ENCODE measurements at regions of chr22 and their contacts with region 1.

Region 1: GRCh38 chr22:22748297-22748743 is 103.9 kb downstream of the GGTLC2 start:
- DNase-seq: peak in 4 of 5 donors; percentile 19 to 33 (median 24)
- H3K4me3 ChIP-seq: no peak overlapping the region
- H3K4me3 Mint-ChIP-seq: no peak overlapping the region
- H3K27ac ChIP-seq: no peak overlapping the region
- H3K27ac Mint-ChIP-seq: peak overlapping the region in 3 of 7 donors; percentile 17 to 74 (median 64)
- H3K4me1 ChIP-seq: peaks cover 11% of the 10 kb centered on the region
- H3K4me1 Mint-ChIP-seq: peaks cover 10 to 31% (median 24%) of the 10 kb centered on the region in 4 donors
- H3K27me3 ChIP-seq: no peaks in the 10 kb centered on the region
- H3K27me3 Mint-ChIP-seq: peaks cover 0 to 4% of the 10 kb centered on the region in 2 donors

Region 2: GRCh38 chr22:22710719-22711531 is 37.4 kb before region 1 on chr22:
- CTCF ChIA-PET with region 1: interaction called, 19 read pairs
- POLR2A ChIA-PET with region 1: no interaction called
- intact Hi-C with region 1: loop called (anchors 2 kb)
- DNase-seq: peak; percentile 54 to 69 (median 64)
- H3K4me3 ChIP-seq: no peak overlapping the region
- H3K4me3 Mint-ChIP-seq: no peak overlapping the region
- H3K27ac ChIP-seq: no peak overlapping the region
- H3K27ac Mint-ChIP-seq: peak overlapping the region in 3 of 7 donors; percentile 29 to 57 (median 36)
- H3K4me1 ChIP-seq: no peaks in the 10 kb centered on the region
- H3K4me1 Mint-ChIP-seq: peaks cover 0 to 3% (median 2%) of the 10 kb centered on the region in 4 donors
- H3K27me3 ChIP-seq: no peaks in the 10 kb centered on the region
- H3K27me3 Mint-ChIP-seq: no peaks in the 10 kb centered on the region

Region 3: DNA sequence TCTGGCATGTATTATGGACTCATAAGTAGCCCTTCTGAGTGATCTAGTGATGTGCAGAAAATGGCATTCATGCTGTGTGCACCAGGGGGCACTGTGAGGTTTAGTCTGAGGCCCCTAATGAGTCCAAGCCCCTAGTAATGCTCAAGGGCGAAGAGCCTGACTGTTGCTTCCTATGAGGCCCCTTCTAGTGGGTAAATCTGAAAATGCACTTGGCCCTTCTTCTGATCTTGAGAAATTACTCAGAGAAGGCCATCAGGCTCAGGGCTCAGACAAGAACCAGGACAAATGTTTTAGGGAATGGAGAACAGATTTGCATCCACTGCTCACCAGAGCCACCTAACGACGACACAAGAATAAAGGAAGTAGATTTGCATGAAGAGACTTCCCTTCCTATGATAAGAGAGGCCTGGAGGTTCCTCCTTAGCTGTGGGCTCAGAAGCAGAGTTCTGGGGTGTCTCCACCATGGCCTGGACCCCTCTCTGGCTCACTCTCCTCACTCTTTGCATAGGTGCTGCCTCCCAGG is 28.1 kb before region 1 on chr22:
- CTCF ChIA-PET with region 1: interaction called, 22 read pairs
- POLR2A ChIA-PET with region 1: interaction called, 9 read pairs
- intact Hi-C with region 1: loop called (anchors 1 kb)
- DNase-seq: peak in 4 of 5 donors; percentile 25 to 46 (median 39)
- H3K4me3 ChIP-seq: no peak overlapping the region
- H3K4me3 Mint-ChIP-seq: no peak overlapping the region
- H3K27ac ChIP-seq: no peak overlapping the region
- H3K27ac Mint-ChIP-seq: peak overlapping the region in 6 of 7 donors; percentile 3 to 88 (median 56)
- H3K4me1 ChIP-seq: peaks cover 9% of the 10 kb centered on the region
- H3K4me1 Mint-ChIP-seq: peaks cover 15 to 33% (median 21%) of the 10 kb centered on the region in 4 donors
- H3K27me3 ChIP-seq: no peaks in the 10 kb centered on the region
- H3K27me3 Mint-ChIP-seq: no peaks in the 10 kb centered on the region

Region 4: DNA sequence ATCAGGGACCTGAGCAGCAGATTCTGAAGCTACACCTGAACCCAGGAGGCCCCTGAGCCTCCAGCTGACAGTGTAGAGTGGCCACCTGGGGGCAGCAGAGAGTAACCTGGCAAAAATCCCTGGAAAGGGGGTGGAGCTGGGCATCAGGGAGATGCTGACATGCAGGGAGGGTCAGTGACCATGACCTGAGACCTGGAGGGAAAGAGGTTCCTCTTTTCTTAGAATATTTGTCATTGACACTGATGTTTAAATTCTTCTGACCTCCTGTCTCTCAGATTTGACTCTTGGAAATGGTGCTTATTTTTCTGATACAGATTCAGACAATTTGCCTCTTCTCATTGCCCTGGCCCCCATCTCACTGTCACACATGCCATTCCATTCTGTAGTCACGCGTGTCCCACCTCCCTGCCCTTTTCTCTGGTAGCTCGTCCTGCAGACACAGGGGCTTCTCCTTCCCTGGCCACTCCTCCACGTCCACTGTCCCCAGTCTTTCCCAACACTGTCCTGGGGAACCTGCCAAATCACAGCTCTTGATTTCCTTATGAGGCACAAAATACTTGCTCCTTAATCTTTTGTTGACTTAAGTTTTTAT is 22.1 kb after region 1 on chr22:
- CTCF ChIA-PET with region 1: interaction called, 138 read pairs
- POLR2A ChIA-PET with region 1: interaction called, 18 read pairs
- intact Hi-C with region 1: no loop called
- DNase-seq: peak; percentile 20 to 46 (median 30)
- H3K4me3 ChIP-seq: no peak overlapping the region
- H3K4me3 Mint-ChIP-seq: no peak overlapping the region
- H3K27ac ChIP-seq: no peak overlapping the region
- H3K27ac Mint-ChIP-seq: peak overlapping the region in 5 of 7 donors; percentile 2 to 72 (median 23)
- H3K4me1 ChIP-seq: no peaks in the 10 kb centered on the region
- H3K4me1 Mint-ChIP-seq: peaks cover 10 to 28% (median 19%) of the 10 kb centered on the region in 4 donors
- H3K27me3 ChIP-seq: no peaks in the 10 kb centered on the region
- H3K27me3 Mint-ChIP-seq: peaks cover 3 to 4% of the 10 kb centered on the region in 2 donors

Region 5: GRCh38 chr22:22877523-22878210 is 129.3 kb after region 1 on chr22:
- CTCF ChIA-PET with region 1: interaction called, 252 read pairs
- POLR2A ChIA-PET with region 1: interaction called, 12 read pairs
- intact Hi-C with region 1: loop called (anchors 1 kb)
- DNase-seq: peak; percentile 72 to 74 (median 73)
- H3K4me3 ChIP-seq: no peak overlapping the region
- H3K4me3 Mint-ChIP-seq: no peak overlapping the region
- H3K27ac ChIP-seq: no peak overlapping the region
- H3K27ac Mint-ChIP-seq: peak overlapping the region in 2 of 7 donors; percentile 42 to 76
- H3K4me1 ChIP-seq: no peaks in the 10 kb centered on the region
- H3K4me1 Mint-ChIP-seq: peaks cover 0 to 5% (median 2%) of the 10 kb centered on the region in 4 donors
- H3K27me3 ChIP-seq: no peaks in the 10 kb centered on the region
- H3K27me3 Mint-ChIP-seq: no peaks in the 10 kb centered on the region

Region 6: DNA sequence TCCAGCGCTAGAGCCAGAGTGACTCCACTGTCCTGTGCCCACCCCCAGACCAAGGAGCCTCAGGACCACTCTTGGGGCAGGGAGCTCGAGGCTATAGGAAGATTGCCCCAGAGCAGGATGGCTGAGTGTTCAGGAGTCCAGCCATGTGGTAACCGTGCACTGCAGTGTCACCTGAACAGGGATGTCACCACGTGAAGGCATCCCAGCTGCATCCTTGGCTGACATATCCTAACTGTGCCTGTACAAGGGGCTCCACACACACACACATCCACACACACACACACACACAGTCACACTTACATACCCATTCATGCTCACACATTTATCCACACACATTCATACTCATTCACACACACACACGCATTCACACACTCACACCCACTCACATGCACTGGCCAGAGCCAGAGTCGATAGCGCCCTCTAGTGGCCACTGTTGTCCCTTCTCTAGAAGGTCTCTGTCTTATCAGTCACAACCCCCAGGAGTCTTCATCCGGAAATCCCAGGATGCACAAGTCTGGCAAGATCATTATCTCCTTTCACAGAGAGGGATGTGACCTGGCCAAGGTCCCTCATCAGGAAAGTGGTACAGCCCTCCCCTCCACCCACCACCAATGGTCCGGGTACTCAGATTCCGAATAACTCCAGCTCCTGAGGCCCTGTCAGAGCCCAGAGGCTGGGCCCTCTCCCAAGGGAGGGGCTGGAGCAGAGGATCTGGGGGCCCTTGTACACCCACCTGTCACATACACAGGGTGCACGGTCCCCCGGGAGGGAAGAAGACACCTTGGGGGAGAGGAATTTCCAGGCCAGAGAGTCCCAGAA is 194.4 kb after region 1 on chr22:
- CTCF ChIA-PET with region 1: interaction called, 10 read pairs
- POLR2A ChIA-PET with region 1: interaction called, 3 read pairs
- intact Hi-C with region 1: no loop called
- DNase-seq: peak; percentile 42 to 72 (median 62)
- H3K4me3 ChIP-seq: no peak overlapping the region
- H3K4me3 Mint-ChIP-seq: no peak overlapping the region
- H3K27ac ChIP-seq: no peak overlapping the region
- H3K27ac Mint-ChIP-seq: no peak overlapping the region
- H3K4me1 ChIP-seq: peaks cover 5% of the 10 kb centered on the region
- H3K4me1 Mint-ChIP-seq: peaks cover 2 to 5% (median 4%) of the 10 kb centered on the region in 4 donors
- H3K27me3 ChIP-seq: no peaks in the 10 kb centered on the region
- H3K27me3 Mint-ChIP-seq: peaks cover 1 to 3% of the 10 kb centered on the region in 2 donors